ENCODE measurements at regions of chr2 and their contacts with region 1.

Region 1: DNA sequence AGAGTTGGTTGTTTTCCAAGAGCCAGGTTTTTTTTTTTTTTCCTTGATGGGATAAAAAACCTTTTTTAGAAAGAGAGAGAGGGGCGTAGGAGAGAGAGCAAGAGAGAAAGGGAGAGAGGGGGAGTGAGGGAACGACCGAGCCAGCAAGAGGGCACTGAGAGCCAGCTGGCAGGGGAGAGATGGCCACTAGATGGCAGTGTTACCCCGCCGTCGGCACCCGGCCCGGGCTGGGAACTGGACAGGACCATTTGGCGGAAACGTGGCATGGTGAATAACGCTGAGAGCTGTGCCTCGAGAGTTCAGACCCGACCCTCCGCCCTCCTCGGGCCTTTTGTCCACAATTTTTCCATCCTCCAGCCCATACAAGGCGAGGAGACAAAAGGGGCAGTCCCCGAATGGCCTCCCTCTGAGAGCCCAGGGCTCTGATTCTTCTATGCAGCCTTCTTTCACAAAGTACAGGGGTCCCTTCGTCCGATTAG is 286.7 kb upstream of the VRK2 start:
- DNase-seq: peak; percentile 48
- ATAC-seq: peak; percentile 97
- H3K4me3 ChIP-seq: peak overlapping the region; percentile 58; the same call in 1 of the 2 replicates
- H3K27ac ChIP-seq: peak overlapping the region; percentile 73
- H3K4me1 ChIP-seq: peaks cover 24% of the 10 kb centered on the region; the same call in 1 of the 2 replicates
- H3K27me3 ChIP-seq: no peaks in the 10 kb centered on the region
- CTCF ChIP-seq: peak; percentile 90 to 93 (median 91)
- EP300 ChIP-seq: no peak
- POLR2A ChIP-seq: no peak
- RAD21 ChIP-seq: peak; percentile 93

Region 2: DNA sequence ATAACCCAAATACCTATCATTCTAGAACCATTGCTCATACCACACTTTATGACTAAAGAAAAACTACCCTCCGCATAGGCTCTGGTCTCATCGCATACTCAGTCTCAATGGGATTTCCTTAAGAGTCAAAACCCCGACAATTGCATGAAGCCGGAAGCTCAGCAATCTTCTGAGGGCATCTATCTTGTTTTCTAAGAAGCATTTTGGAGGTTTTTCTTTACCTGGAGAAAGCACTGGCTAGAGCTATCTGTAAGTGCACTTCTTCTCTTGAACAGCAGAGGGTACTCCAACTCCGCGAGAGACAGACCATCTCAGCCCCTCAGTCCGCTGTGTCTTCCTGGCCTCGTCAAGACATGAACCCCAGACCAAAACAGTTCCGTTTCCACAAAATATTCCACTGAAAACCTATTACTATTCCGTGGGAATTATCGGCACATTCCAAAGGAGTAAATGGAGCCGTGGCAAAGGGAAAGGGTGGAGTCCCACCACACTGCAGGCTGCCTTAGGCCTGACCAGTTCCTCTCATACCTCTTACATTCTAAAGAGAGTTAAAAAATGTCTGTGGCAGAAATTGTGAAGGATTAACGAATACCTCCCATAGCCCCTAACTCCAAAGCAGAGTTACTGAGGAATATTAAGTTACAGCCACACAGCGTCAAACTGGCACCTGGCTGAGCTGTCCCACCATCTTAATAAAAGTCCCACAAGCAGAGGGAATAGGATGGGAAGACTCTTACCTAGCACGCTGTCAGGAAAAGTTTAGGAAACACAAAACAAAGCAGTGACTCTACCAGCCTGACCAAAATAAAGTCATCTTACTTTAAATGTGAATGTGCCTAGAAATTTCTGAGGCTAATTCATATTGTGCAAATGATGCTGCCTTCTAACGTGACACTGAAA is 38.9 kb before region 1 on chr2:
- CTCF ChIA-PET with region 1: interaction called, 12 read pairs
- POLR2A ChIA-PET with region 1: interaction called, 3 read pairs
- RAD21 ChIA-PET with region 1: interaction called, 10 read pairs
- SMC1A ChIA-PET with region 1: interaction called, 12 read pairs
- in situ Hi-C with region 1: no loop called
- intact Hi-C with region 1: loop called (anchors 1 kb)
- DNase-seq: peak; percentile 47
- ATAC-seq: peak; percentile 99
- H3K4me3 ChIP-seq: no peak overlapping the region
- H3K27ac ChIP-seq: no peak overlapping the region
- H3K4me1 ChIP-seq: no peaks in the 10 kb centered on the region
- H3K27me3 ChIP-seq: no peaks in the 10 kb centered on the region
- CTCF ChIP-seq: peak; percentile 91
- EP300 ChIP-seq: no peak
- POLR2A ChIP-seq: no peak
- RAD21 ChIP-seq: peak; percentile 93

Region 3: GRCh38 chr2:57776916-57777315 is 17.1 kb after region 1 on chr2:
- CTCF ChIA-PET with region 1: interaction called, 10 read pairs
- POLR2A ChIA-PET with region 1: no interaction called
- RAD21 ChIA-PET with region 1: interaction called, 4 read pairs
- SMC1A ChIA-PET with region 1: interaction called, 4 read pairs
- in situ Hi-C with region 1: no loop called
- intact Hi-C with region 1: no loop called
- DNase-seq: no peak
- ATAC-seq: no peak
- H3K4me3 ChIP-seq: no peak overlapping the region
- H3K27ac ChIP-seq: no peak overlapping the region
- H3K4me1 ChIP-seq: no peaks in the 10 kb centered on the region
- H3K27me3 ChIP-seq: no peaks in the 10 kb centered on the region
- CTCF ChIP-seq: no peak
- EP300 ChIP-seq: no peak
- POLR2A ChIP-seq: no peak
- RAD21 ChIP-seq: no peak

Region 4: DNA sequence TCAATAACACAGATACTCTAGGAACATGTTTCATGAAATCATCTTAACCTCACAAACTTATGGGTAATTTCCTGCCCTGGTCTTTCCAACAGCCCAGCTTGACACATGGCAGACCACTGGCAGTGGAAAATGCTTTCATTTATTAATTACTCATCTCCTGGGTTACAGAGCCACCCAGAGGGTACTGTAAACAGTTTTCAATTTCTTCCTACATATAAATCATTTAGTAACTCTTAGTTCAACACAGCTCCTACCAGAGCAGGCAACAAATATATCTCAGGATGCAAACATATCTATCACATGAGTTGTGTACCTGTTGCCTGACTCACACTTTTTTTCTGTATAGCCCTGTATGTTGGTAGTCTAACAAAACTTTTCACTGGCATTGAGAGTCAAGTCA is 187.5 kb after region 1 on chr2:
- CTCF ChIA-PET with region 1: interaction called, 14 read pairs
- POLR2A ChIA-PET with region 1: no interaction called
- RAD21 ChIA-PET with region 1: no interaction called
- SMC1A ChIA-PET with region 1: no interaction called
- in situ Hi-C with region 1: no loop called
- intact Hi-C with region 1: no loop called
- DNase-seq: no peak
- ATAC-seq: peak; percentile 45; the same call in 2 of the 3 replicates
- H3K4me3 ChIP-seq: no peak overlapping the region
- H3K27ac ChIP-seq: no peak overlapping the region
- H3K4me1 ChIP-seq: no peaks in the 10 kb centered on the region
- H3K27me3 ChIP-seq: no peaks in the 10 kb centered on the region
- CTCF ChIP-seq: no peak
- EP300 ChIP-seq: no peak
- POLR2A ChIP-seq: no peak
- RAD21 ChIP-seq: no peak

Region 5: DNA sequence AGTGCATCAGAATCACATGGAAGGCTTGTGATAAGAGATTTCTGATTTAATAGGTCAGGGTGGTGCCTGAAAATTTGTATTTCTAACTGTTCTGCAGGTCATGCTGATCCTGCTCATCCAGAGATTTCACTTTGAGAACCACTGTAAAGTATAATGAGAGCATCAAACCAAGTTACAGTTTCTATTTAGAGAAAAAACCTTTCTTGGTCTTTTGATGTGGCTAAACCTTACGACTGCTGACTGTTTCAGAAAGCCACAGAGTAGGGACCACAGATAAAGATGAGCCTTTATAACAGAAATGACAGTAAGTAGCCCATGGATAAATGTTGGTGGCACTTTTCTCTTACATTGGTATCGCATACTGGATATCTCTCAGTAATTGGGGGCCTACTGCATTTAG is 590.6 kb after region 1 on chr2:
- CTCF ChIA-PET with region 1: no interaction called
- POLR2A ChIA-PET with region 1: no interaction called
- RAD21 ChIA-PET with region 1: no interaction called
- SMC1A ChIA-PET with region 1: no interaction called
- in situ Hi-C with region 1: no loop called
- intact Hi-C with region 1: loop called (anchors 10 kb)
- DNase-seq: peak; percentile 21
- ATAC-seq: peak; percentile 97
- H3K4me3 ChIP-seq: no peak overlapping the region
- H3K27ac ChIP-seq: no peak overlapping the region
- H3K4me1 ChIP-seq: no peaks in the 10 kb centered on the region
- H3K27me3 ChIP-seq: peaks cover 0 to 3% of the 10 kb centered on the region in 2 experiments; a peak in 1 of 4 replicates
- CTCF ChIP-seq: no peak
- EP300 ChIP-seq: peak; percentile 58 to 61; a peak in 3 of 4 replicates
- POLR2A ChIP-seq: no peak
- RAD21 ChIP-seq: no peak

Region 6: GRCh38 chr2:58871469-58872142 is 1111.7 kb after region 1 on chr2:
- CTCF ChIA-PET with region 1: no interaction called
- POLR2A ChIA-PET with region 1: no interaction called
- RAD21 ChIA-PET with region 1: interaction called, 10 read pairs
- SMC1A ChIA-PET with region 1: interaction called, 3 read pairs
- in situ Hi-C with region 1: no loop called
- intact Hi-C with region 1: loop called (anchors 5 kb)
- DNase-seq: no peak
- ATAC-seq: peak; percentile 73
- H3K4me3 ChIP-seq: no peak overlapping the region
- H3K27ac ChIP-seq: no peak overlapping the region
- H3K4me1 ChIP-seq: no peaks in the 10 kb centered on the region
- H3K27me3 ChIP-seq: no peaks in the 10 kb centered on the region
- CTCF ChIP-seq: peak; percentile 10 to 29 (median 21); a peak in 3 of 6 replicates
- EP300 ChIP-seq: no peak
- POLR2A ChIP-seq: no peak
- RAD21 ChIP-seq: peak; percentile 48

Measured in GM12878 (cell line).